Activated T-helper 1 cell treated with anti-CD3 and anti-CD28 coated beads, Interleukin-12 subunit alpha, Interleukin-12 subunit beta, Interleukin-2, Interleukin-4 antibody, amounts not matched to agents 30 ng/mL and 10 ng/mL and 1 ng/mL, durations not matched to agents 14 hours and 24 hours and 36 hours (primary cell): ENCODE measurements at regions of chr10 and their contacts with region 1.

Region 1: DNA sequence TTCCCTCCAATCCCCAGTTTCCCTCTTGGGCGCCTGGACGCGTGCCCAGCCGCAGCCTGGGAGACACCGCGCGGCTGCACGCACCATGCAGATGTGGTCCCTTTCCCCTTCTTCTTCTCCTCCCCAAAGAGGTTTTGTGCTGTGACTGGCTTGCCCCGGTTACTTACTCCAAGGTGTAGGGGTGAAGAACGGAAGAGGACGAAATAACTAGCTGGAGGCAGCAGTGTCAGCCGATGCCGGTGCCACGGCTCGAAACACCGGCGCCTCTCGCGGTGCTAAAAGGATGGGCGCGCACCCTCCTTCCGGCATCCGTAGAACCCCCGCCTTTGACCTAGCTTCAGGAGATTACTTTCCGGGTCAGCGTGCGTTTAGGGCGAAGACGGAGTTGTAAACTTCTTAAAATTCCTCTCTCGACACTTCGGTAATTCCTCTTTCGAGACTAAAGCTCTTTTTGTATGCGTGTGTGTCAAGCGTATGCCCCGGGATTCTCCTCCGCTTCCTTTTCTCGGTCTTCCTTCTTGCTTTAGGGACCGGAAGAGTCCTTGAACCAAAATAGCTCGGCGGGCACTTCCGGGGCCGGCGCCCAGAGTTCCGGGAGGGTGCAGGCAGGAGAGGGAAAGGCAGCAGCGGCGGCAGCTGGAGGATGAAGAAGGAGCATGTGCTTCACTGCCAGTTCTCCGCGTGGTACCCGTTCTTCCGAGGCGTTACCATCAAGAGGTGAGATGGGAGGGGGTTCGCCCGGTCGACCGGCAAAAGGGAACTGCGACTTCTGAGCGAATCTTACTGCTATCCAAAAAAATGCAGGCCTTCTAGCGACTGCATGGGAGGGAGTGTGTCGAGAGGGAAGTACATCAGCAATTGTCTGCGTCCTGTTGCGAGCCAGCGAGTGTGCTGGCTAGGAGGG is at the starts of genes CDC123 and NUDT5:
- DNase-seq: peak; percentile 83
- H3K4me3 Mint-ChIP-seq: peak within 1 kb of the TSS; percentile 90
- H3K27ac Mint-ChIP-seq: peak within 1 kb of the TSS; percentile 97
- H3K4me1 Mint-ChIP-seq: peaks cover 60% of the 10 kb centered on the region
- H3K27me3 Mint-ChIP-seq: no peaks in the 10 kb centered on the region
- total RNA-seq, gene CDC123: 190 and 191 TPM in 2 replicates
- total RNA-seq, gene NUDT5: 121 and 131 TPM in 2 replicates

Region 2: DNA sequence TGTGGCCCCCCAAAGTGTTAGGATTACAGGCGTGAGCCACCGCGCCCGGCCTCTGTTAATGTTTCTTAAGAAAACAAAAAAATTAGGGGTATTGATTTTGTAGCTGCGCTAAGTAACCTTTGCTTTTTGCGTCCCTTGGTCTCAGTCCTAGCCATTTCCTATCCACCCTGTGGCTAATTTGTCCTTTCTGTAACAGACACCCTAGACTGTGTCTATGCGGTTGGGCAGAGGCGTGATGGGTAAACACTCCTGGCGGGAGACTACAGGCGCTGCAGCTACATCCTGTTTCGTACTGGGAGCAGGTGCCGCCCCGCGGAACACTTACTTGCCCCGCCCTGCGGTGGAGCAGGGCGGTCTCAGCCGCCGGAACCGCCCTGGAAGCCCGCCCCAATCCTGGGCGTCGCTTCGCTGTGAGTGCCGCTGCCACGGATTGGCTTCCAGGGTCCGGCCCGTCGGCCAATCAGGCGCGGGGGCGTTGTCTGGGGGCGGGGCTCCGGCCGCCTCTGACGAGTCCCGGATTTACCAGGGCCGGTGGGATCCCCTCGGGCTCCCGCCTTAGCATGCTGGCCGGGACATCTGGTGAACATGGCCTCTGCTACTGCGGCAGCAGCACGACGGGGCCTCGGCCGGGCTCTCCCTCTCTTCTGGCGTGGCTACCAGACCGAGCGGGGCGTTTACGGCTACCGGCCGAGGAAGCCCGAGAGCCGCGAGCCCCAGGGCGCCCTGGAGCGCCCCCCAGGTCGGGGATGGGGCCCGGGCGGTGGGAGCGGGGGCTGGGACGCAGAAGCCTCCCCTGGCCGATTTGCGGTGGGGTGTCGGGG is 127.2 kb before region 1 on chr10 and contains the start of gene DHTKD1:
- intact Hi-C with region 1: loop called (anchors 1 kb)
- DNase-seq: peak; percentile 100
- H3K4me3 Mint-ChIP-seq: peak within 1 kb of the TSS; percentile 83
- H3K27ac Mint-ChIP-seq: peak within 1 kb of the TSS; percentile 83
- H3K4me1 Mint-ChIP-seq: peaks cover 27% of the 10 kb centered on the region
- H3K27me3 Mint-ChIP-seq: no peaks in the 10 kb centered on the region
- total RNA-seq, gene DHTKD1: 19.9 and 22.6 TPM in 2 replicates

Region 3: GRCh38 chr10:12129222-12130111 is 66.4 kb before region 1 on chr10 and contains the start of gene SEC61A2:
- intact Hi-C with region 1: loop called (anchors 1 kb)
- DNase-seq: peak; percentile 99
- H3K4me3 Mint-ChIP-seq: peak within 1 kb of the TSS; percentile 94
- H3K27ac Mint-ChIP-seq: peak within 1 kb of the TSS; percentile 90
- H3K4me1 Mint-ChIP-seq: peaks cover 49% of the 10 kb centered on the region
- H3K27me3 Mint-ChIP-seq: no peaks in the 10 kb centered on the region
- total RNA-seq, gene SEC61A2: 21.9 and 22.1 TPM in 2 replicates

Region 4: DNA sequence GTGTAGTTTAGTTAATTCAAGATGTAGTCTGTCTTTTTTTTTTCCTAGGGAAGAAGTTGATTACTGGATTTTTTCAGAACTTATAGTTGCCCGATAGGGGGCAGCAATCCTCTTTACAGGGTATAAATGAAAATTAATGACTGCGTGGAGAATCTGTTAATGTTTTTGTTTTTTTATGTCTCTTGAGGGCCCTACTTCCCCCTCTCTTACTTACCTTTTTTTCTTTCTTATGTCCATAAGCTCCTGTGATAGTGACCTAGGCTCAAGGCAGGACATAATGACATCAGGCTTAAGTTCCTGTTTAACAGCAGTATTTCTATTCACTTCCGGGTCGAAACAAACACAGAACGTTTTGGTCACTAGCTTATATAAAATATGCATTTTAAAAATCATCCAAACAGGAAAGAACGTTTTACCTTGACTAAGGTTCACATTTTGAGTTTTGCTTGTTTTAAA is 18.9 kb after region 1 on chr10:
- intact Hi-C with region 1: loop called (anchors 1 kb)
- DNase-seq: peak; percentile 15
- H3K4me3 Mint-ChIP-seq: peak overlapping the region; percentile 43
- H3K27ac Mint-ChIP-seq: peak overlapping the region; percentile 59
- H3K4me1 Mint-ChIP-seq: peaks cover 37% of the 10 kb centered on the region
- H3K27me3 Mint-ChIP-seq: no peaks in the 10 kb centered on the region

Region 5: DNA sequence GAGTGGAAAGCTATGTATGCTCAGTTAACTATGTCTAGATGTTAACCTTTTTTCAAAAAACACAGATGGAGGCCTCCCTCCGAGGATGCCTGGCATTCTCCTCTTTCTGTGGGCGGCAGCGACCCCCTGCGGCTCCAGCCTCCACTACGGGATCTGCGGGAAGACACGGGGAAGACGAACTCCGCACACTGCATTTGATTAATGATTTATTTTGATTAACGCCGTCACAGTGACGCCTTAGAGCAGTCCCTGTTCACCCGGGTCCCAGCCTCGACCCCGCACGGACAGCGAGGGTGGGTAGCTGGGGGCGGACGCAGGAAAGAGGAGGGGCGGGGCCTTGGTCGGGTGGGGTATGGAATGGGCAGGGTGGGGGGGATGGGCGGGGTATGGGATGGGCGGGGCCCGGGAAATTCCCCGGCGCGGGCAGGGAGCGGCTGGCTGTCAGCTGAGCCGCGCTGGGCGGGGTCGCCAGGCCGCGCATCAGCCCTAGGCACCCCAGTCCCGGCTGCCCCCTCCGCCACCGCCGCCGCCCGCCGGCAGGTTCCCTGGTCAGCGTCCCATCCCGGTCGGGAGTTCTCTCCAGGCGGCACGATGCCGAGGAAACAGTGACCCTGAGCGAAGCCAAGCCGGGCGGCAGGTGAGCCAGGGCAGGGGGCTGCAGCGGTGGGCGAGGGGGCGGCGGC is 904.0 kb after region 1 on chr10 and contains the start of gene OPTN:
- intact Hi-C with region 1: loop called (anchors 1 kb)
- DNase-seq: peak; percentile 73
- H3K4me3 Mint-ChIP-seq: peak within 1 kb of the TSS; percentile 93
- H3K27ac Mint-ChIP-seq: peak within 1 kb of the TSS; percentile 92
- H3K4me1 Mint-ChIP-seq: peaks cover 55% of the 10 kb centered on the region
- H3K27me3 Mint-ChIP-seq: no peaks in the 10 kb centered on the region
- total RNA-seq, gene OPTN: 52.6 and 54.1 TPM in 2 replicates